ENCODE measurements at regions of chr6 and their contacts with region 1.

Region 1: DNA sequence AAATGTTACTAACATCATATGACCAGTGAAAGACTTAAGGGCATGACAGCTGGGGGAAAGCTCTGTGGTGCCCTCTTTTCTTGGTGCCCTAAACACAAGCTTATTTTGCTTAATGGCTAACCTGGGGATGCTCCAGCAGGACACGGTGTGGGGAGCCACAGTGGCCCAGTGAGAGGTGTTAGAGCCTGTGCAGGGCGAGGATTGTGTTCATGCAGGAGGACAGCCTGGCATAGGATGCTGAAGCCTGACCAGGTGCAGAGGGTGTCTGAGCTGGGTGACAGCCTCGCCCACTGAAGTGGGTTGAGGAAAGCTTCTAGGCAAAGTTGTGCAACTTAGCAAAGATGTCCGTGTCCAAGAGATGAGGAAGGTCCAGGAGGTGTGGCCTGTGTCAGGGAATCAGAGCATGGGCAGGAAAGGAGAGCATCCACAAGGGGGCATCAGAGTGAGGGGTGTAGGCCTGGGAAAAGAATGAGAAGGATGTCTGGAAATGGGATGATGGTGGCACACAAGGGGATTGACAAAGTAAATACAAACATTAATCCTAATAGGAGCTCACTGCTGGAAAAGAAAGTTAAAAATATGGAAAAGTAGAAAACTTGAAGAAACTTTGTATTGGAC is 33.9 kb downstream of the SLC17A4 start:
- DNase-seq: peak; percentile 77
- ATAC-seq: peak; percentile 83
- H3K4me3 ChIP-seq: no peak overlapping the region
- H3K27ac ChIP-seq: no peak overlapping the region
- H3K4me1 ChIP-seq: no peaks in the 10 kb centered on the region
- H3K27me3 ChIP-seq: peaks cover 13% of the 10 kb centered on the region; the same call in 1 of the 2 replicates
- CTCF ChIP-seq: peak; percentile 73

Region 2: DNA sequence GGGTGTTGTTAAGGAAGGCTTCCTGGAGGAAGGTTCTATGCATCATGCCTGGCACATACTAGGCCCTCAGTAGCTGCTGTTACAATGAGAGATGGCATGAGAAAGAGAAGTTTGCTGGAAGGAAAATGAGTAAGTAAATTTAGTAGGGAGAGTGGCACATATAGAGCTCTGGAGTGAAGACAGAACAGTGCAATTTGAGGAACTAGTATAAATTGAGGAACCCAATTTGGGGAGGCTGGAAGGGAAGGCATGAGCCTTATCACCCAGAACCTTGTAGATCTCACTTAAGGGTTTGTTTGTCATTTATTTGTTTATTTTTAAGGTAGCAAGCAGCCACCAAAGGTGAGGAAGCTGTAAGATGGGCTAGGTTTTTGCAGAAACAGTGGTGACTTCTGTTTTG is 223.5 kb before region 1 on chr6:
- CTCF ChIA-PET with region 1: no interaction called
- POLR2A ChIA-PET with region 1: no interaction called
- intact Hi-C with region 1: no loop called
- DNase-seq: no peak
- ATAC-seq: no peak
- H3K4me3 ChIP-seq: no peak overlapping the region
- H3K27ac ChIP-seq: no peak overlapping the region
- H3K4me1 ChIP-seq: no peaks in the 10 kb centered on the region
- H3K27me3 ChIP-seq: no peaks in the 10 kb centered on the region
- CTCF ChIP-seq: no peak

Region 3: DNA sequence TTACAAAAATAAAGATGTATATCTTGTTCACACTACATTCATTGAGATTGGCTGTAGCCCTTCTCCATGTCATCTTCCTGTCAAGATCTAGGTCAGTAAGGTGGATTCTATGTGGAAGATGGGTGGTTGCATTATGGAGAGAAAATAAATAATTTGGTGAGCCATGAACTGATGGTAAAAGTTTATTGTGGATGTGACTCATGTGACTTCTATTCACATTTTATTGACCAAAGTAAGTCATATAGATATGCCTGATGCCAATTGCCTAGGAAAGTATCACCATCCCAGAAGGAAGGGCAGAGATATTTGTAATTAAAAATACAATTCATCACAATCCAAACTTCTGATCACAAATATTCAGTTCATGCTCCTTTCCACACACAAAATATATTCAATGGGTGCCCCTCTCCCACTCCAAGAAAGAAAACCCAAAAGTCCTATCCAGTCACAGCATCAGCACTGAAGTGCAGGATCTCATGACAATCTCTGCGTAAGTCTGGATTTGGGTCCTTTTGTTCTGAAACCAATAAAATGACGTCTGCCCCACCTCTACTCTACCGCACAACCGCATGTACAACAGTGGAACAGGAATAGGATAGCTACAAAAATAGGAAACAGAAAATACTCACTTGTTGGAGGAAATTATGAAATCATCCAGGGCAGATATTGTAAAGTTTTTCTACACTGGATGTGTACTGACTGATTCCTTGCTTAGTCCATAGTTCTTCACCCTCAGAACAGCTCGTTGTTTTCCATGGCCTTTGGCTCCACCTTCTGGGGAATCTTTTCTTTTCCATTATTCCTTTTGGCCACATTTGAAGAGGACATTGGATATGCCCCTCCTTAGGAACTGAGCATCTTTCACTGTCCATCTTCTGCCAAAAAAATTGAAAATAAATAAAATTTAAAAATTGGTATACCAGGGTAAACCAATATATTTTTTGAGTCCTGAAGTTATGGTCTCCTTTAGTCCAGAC is 101.8 kb after region 1 on chr6:
- CTCF ChIA-PET with region 1: interaction called, 4 read pairs
- POLR2A ChIA-PET with region 1: no interaction called
- intact Hi-C with region 1: loop called (anchors 1 kb)
- DNase-seq: peak; percentile 75
- ATAC-seq: peak; percentile 87
- H3K4me3 ChIP-seq: no peak overlapping the region
- H3K27ac ChIP-seq: no peak overlapping the region
- H3K4me1 ChIP-seq: peaks cover 11% of the 10 kb centered on the region
- H3K27me3 ChIP-seq: peaks cover 27% of the 10 kb centered on the region; the same call in 1 of the 2 replicates
- CTCF ChIP-seq: peak; percentile 81

Region 4: DNA sequence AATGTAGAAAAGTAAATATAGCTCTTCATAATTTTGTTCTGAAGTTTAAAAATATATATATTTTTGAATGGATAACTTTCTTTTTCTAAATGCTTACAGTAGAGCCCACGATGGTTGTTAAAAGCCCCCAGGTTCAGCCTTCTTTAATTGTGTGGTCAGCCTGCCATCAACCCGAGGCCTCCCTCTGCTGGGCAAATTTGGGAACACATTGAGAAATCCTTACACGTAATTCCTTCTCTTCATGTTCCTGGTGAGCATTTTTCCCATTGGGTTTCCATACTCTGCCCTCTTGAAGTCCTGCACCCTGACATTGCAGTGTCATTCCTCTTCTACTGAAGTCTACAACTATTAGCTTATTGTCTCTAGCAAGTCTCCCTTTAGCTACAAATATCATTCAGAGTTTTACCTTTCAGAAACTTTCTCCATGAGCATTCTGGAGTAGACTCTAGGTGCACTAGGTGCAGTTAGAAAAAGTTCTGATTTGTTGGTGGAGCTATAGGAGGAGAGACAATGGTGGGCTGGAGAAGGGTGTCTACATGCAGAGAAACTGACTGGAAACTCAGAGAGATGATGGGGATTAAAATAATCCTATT is 214.8 kb after region 1 on chr6:
- CTCF ChIA-PET with region 1: no interaction called
- POLR2A ChIA-PET with region 1: no interaction called
- intact Hi-C with region 1: loop called (anchors 2 kb)
- DNase-seq: peak; percentile 68
- ATAC-seq: peak; percentile 58
- H3K4me3 ChIP-seq: no peak overlapping the region
- H3K27ac ChIP-seq: no peak overlapping the region
- H3K4me1 ChIP-seq: peaks cover 5% of the 10 kb centered on the region; the same call in 1 of the 2 replicates
- H3K27me3 ChIP-seq: no peaks in the 10 kb centered on the region
- CTCF ChIP-seq: peak; percentile 81

Measured in PC-3 (cell line).